Upper lobe of right lung (tissue), 1 donor: ENCODE measurements at regions of chr12 and their contacts with region 1.

Region 1: DNA sequence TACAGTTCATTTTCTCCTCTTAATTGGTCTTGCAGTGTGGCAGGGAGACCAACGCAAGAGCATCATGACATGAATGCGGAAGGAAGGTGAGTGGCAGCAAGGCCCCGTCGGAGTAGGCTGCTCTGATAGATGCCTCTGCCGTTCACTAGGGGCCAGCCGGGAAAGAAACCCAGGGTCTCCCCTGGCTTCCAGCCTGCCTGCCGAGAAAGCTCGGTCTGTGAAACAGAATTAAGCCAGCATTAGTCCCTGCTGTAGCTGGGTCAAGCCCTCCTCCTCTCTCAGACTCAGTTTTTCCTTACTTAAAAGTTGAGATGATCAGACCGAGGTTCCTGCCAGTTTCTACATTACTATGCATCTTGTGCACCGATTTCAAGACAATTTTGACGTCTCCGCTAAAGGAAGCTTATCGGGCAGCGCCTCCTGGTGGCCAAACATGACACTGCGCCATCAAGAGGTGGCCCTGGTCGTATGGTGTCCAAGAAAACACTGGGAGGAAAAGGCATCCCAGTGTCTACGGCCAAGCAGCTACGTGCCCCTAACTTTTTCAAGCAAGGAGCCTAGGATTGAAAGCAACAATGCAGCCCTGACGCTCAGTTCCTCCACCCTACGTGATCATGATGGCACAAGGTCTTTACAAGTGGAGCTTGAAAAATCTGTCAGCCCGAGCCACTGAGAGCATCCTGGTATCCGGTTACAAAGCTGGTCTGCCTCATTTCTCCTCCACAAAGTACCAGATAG is 131.6 kb downstream of the KSR2 start:
- DNase-seq: peak; percentile 86
- ATAC-seq: peak; percentile 84
- H3K4me3 ChIP-seq: no peak overlapping the region
- H3K27ac ChIP-seq: no peak overlapping the region
- H3K4me1 ChIP-seq: no peaks in the 10 kb centered on the region
- H3K27me3 ChIP-seq: peaks cover 8% of the 10 kb centered on the region
- CTCF ChIP-seq: peak; percentile 98

Region 2: DNA sequence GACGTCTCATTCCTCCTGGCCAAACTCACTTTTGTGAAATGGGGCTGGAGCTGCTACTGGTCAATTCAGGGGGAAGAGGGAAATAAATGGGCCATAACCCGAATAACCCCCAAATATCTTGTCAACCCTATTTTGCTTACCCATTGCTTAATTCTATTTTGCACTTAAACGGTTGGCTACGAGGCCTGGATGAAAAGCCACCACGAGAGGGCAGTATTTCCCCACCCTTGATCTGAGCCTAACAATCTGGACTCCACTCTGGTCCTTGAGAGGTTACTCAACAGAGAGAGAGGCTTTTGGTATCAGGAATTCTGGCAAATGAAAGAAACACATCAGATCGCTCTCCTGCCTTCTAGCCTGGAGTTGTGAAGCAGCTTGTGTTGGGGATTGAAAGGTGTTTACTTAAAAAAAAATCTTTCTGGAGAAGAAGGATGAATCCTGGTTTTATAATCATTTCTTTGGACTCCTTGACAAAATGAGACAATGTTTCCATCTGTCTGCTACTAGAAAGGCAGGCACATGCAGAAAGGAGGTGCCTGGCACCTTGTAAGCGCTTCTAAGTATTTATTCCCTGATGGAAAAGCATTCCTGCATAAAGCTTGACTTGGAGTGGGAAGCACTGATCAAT is 624.5 kb before region 1 on chr12:
- intact Hi-C with region 1: loop called (anchors 10 kb)
- DNase-seq: peak; percentile 69
- ATAC-seq: peak; percentile 93
- H3K4me3 ChIP-seq: no peak overlapping the region
- H3K27ac ChIP-seq: no peak overlapping the region
- H3K4me1 ChIP-seq: no peaks in the 10 kb centered on the region
- H3K27me3 ChIP-seq: peaks cover 9% of the 10 kb centered on the region
- CTCF ChIP-seq: peak; percentile 93

Region 3: DNA sequence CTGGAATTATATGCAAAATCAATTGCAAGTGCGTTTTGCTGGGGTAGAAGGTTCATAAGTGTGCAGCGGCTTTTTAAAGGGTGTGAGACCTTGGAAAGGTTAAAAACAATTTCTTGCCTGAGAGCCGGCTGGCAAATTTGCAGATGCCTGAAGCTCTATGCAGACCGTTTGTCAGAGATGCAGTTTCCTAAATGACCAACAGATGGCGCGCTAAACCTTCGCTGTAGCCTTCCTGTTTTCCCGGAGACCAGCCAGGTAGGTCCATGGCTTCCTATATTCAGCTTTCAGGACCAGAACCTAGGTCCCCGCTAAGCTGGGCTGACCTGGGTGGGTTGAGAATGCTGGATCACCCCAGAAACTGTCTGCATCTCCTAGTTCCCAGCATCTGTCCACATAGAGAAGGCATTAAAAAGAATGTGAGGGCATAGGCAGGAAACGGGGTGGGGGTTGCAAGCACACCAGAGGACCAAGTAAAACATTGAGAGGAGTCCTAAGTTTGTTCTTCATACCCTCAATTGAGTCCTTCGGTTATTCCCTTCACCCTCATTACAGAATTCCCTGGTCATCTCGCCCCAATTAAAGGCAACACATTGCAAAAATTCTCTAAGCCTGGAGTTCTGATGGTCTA is 470.0 kb before region 1 on chr12:
- intact Hi-C with region 1: loop called (anchors 5 kb)
- DNase-seq: no peak
- ATAC-seq: peak; percentile 82
- H3K4me3 ChIP-seq: no peak overlapping the region
- H3K27ac ChIP-seq: no peak overlapping the region
- H3K4me1 ChIP-seq: no peaks in the 10 kb centered on the region
- H3K27me3 ChIP-seq: peaks cover 22% of the 10 kb centered on the region
- CTCF ChIP-seq: peak; percentile 92

Region 4: GRCh38 chr12:117874842-117875434 is 37.8 kb after region 1 on chr12:
- intact Hi-C with region 1: no loop called
- DNase-seq: peak; percentile 84
- ATAC-seq: peak; percentile 96
- H3K4me3 ChIP-seq: no peak overlapping the region
- H3K27ac ChIP-seq: no peak overlapping the region
- H3K4me1 ChIP-seq: no peaks in the 10 kb centered on the region
- H3K27me3 ChIP-seq: peaks cover 17% of the 10 kb centered on the region
- CTCF ChIP-seq: peak; percentile 92